Heart left ventricle (tissue), 16 donors: ENCODE measurements at regions of chr19 and their contacts with region 1.

Region 1: GRCh38 chr19:38618590-38619360 is at the start of gene EIF3K:
- DNase-seq: peak; percentile 98 to 100 (median 99)
- ATAC-seq: peak; percentile 93 to 97 (median 95)
- H3K4me3 ChIP-seq: peak within 1 kb of the TSS; percentile 54 to 98 (median 84)
- H3K27ac ChIP-seq: peak within 1 kb of the TSS; percentile 81 to 96 (median 90)
- H3K4me1 ChIP-seq: peaks cover 2 to 28% (median 20%) of the 10 kb centered on the region in 12 donors
- H3K27me3 ChIP-seq: no peaks in the 10 kb centered on the region
- CTCF ChIP-seq: no peak
- POLR2A ChIP-seq: peak; percentile 51 to 80
- total RNA-seq, gene EIF3K: 447 to 1,239 (median 596) TPM

Region 2: GRCh38 chr19:38389560-38390281 is 229.1 kb before region 1 on chr19:
- intact Hi-C with region 1: loop called in 1 of 10 experiments (anchors 10 kb)
- DNase-seq: peak in 1 of 5 donors; percentile 53
- ATAC-seq: peak in 2 of 4 donors; percentile 10 to 16
- H3K4me3 ChIP-seq: peak overlapping the region in 8 of 12 donors; percentile 33 to 69 (median 58)
- H3K27ac ChIP-seq: peak overlapping the region in 6 of 12 donors; percentile 26 to 80 (median 52)
- H3K4me1 ChIP-seq: peaks cover 0 to 44% (median 25%) of the 10 kb centered on the region in 12 donors
- H3K27me3 ChIP-seq: peaks cover 0 to 46% (median 10%) of the 10 kb centered on the region in 9 donors
- CTCF ChIP-seq: no peak
- POLR2A ChIP-seq: no peak

Region 3: GRCh38 chr19:38402967-38403861 is 215.6 kb before region 1 on chr19 and contains the start of gene FAM98C:
- intact Hi-C with region 1: loop called in 4 of 10 experiments (anchors 5 to 10 kb)
- DNase-seq: peak; percentile 95 to 99 (median 96)
- ATAC-seq: peak; percentile 99 to 100 (median 99)
- H3K4me3 ChIP-seq: peak within 1 kb of the TSS; percentile 70 to 98 (median 90)
- H3K27ac ChIP-seq: peak within 1 kb of the TSS; percentile 52 to 90 (median 79)
- H3K4me1 ChIP-seq: peaks cover 0 to 12% (median 7%) of the 10 kb centered on the region in 12 donors
- H3K27me3 ChIP-seq: peaks cover 5 to 38% (median 20%) of the 10 kb centered on the region in 9 donors
- CTCF ChIP-seq: peak; percentile 94 to 100 (median 99)
- POLR2A ChIP-seq: peak in 1 of 2 donors; percentile 27
- total RNA-seq, gene FAM98C: 9.3 to 15.8 (median 11.9) TPM

Region 4: DNA sequence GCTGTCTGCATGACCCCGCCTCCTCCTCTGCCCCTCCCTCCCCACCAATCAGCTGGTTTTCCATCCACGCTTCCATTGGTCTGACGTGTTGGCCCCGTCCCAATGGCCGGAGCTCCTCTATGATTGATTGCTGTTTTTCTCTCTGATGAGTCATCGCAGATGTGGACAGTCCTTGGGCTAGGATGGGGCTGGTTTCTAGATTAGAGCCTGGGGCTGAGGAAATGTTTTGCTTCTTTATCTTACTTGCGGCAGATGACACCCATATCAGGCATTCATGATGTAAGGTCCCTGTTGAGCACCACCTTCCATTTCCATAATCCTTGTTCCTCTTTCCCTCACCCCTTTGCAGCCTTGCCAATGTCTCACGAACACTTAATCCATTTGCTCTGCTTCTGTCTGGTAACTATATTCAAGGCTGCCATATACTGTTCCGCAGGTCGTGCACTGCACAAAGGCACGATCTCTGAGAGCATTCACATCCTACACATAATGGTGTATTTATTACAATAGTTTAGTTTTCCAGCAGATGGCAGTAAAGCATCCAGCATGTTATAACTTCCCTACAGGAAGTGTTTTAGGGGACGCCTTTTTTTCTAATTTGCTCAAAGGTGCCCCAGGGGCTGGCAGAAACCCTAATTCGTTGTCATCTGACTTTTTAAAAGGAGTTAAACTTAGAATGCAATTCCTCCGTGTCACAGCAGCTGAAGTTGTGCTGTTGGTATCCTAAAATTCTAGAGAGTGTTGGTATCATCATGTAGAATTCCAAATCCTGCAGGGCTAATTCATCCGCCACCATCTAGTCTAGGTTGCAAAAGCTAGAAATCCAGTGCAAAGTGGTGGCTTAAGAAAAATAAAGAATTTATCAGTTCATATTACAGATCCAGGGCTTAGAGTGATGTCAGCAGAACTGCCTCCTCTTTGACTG is 74.5 kb before region 1 on chr19:
- intact Hi-C with region 1: loop called in 1 of 10 experiments (anchors 10 kb)
- DNase-seq: peak in 4 of 5 donors; percentile 44 to 67 (median 55)
- ATAC-seq: peak; percentile 64 to 84 (median 83)
- H3K4me3 ChIP-seq: peak overlapping the region in 4 of 12 donors; percentile 9 to 44 (median 26)
- H3K27ac ChIP-seq: peak overlapping the region in 1 of 12 donors; percentile 14
- H3K4me1 ChIP-seq: peaks cover 0 to 14% (median 5%) of the 10 kb centered on the region in 12 donors
- H3K27me3 ChIP-seq: no peaks in the 10 kb centered on the region
- CTCF ChIP-seq: peak; percentile 43 to 69 (median 59)
- POLR2A ChIP-seq: no peak

Region 5: DNA sequence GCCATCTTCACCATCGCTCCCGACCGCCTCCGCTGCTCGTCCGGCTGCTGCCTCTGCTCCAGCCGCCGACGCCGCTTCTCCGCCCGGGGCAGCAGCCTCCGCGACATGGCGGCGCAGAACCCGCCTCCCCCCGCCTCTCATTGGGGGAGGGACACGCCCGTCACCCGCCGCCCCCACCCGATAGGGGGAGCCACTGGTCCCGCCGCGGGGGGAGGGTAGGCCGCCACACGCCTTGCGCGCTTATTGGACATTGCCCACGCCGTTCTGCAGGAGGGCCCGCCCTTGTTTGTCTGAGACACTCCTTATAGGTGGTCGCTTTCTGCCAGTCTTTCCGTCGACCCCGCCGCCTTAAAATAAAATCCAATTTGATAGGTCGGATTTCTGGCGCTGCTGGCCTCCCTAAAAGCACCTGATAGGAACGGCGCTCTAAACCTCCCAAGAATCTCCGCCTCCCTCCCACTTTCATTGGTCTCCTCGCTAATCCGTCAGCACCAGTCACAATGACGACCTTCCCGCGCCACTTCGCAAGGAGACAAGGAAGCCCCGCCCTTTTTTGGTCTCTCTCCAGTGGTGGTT is 231.2 kb after region 1 on chr19 and contains the start of gene HNRNPL:
- intact Hi-C with region 1: loop called in 1 of 10 experiments (anchors 10 kb)
- DNase-seq: peak; percentile 99 to 100 (median 100)
- ATAC-seq: peak; percentile 79 to 85 (median 81)
- H3K4me3 ChIP-seq: peak within 1 kb of the TSS; percentile 83 to 100 (median 95)
- H3K27ac ChIP-seq: peak within 1 kb of the TSS; percentile 99 to 100 (median 100)
- H3K4me1 ChIP-seq: peaks cover 9 to 59% (median 46%) of the 10 kb centered on the region in 12 donors
- H3K27me3 ChIP-seq: no peaks in the 10 kb centered on the region
- CTCF ChIP-seq: peak; percentile 21 to 81 (median 56)
- POLR2A ChIP-seq: peak; percentile 40 to 90
- total RNA-seq, gene HNRNPL: 93.6 to 256 (median 165) TPM